Naive thymus-derived CD4-positive, alpha-beta T cell (primary cell): ENCODE measurements at regions of chr17 and their contacts with region 1.

Region 1: DNA sequence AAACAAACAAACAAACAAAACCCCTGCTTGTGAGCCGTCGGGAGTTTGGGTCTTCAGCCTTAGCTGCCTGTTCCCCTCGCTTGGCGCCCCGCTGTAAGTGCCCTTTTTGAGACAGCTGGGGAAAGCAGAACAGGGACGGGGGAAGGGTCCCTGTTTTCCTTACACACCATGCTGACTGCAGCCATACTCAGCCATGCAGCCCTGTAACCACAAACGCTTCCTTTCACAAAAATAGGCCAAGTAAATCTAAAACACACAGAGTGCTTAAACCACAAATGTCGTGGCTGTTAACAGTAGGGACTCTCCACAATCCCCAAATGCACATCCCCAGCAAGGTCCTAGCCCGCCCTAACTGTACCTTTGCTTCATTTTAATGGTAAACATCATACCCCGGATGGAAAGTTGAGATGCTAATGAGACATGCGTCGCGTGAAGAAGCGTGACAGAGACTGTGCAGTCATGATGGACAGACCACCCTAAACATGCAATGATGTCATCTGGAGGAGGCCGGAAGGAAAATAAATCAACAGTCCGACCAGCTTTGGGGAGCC is 129.9 kb downstream of the MGAT5B start:
- DNase-seq: peak in 8 of 9 donors; percentile 45 to 89 (median 80)
- ATAC-seq: peak; percentile 95
- H3K4me3 ChIP-seq: peak overlapping the region; percentile 52
- H3K4me3 Mint-ChIP-seq: peak overlapping the region; percentile 58 to 88 (median 74)
- H3K27ac ChIP-seq: peak overlapping the region; percentile 70
- H3K27ac Mint-ChIP-seq: peak overlapping the region; percentile 84 to 99 (median 93)
- H3K4me1 ChIP-seq: peaks cover 33 to 57% of the 10 kb centered on the region in 2 donors
- H3K4me1 Mint-ChIP-seq: peaks cover 27 to 74% (median 57%) of the 10 kb centered on the region in 7 donors
- H3K27me3 ChIP-seq: no peaks in the 10 kb centered on the region
- H3K27me3 Mint-ChIP-seq: no peaks in the 10 kb centered on the region

Region 2: GRCh38 chr17:76924345-76925342 is 73.4 kb before region 1 on chr17:
- CTCF ChIA-PET with region 1: no interaction called
- POLR2A ChIA-PET with region 1: no interaction called
- intact Hi-C with region 1: loop called in 1 of 2 experiments (anchors 10 kb)
- DNase-seq: no peak
- ATAC-seq: no peak
- H3K4me3 ChIP-seq: no peak overlapping the region
- H3K4me3 Mint-ChIP-seq: no peak overlapping the region
- H3K27ac ChIP-seq: no peak overlapping the region
- H3K27ac Mint-ChIP-seq: no peak overlapping the region
- H3K4me1 ChIP-seq: no peaks in the 10 kb centered on the region
- H3K4me1 Mint-ChIP-seq: no peaks in the 10 kb centered on the region
- H3K27me3 ChIP-seq: no peaks in the 10 kb centered on the region
- H3K27me3 Mint-ChIP-seq: peaks cover 0 to 5% (median 0%) of the 10 kb centered on the region in 5 donors

Region 3: GRCh38 chr17:76968707-76969597 is 29.1 kb before region 1 on chr17:
- CTCF ChIA-PET with region 1: no interaction called
- POLR2A ChIA-PET with region 1: interaction called, 4 read pairs
- intact Hi-C with region 1: loop called (anchors 1 to 2 kb)
- DNase-seq: peak; percentile 21 to 48 (median 36)
- ATAC-seq: peak; percentile 80
- H3K4me3 ChIP-seq: peak overlapping the region; percentile 59
- H3K4me3 Mint-ChIP-seq: peak overlapping the region; percentile 74 to 92 (median 86)
- H3K27ac ChIP-seq: peak overlapping the region; percentile 51
- H3K27ac Mint-ChIP-seq: peak overlapping the region; percentile 11 to 85 (median 54)
- H3K4me1 ChIP-seq: peaks cover 7 to 12% of the 10 kb centered on the region in 2 donors
- H3K4me1 Mint-ChIP-seq: peaks cover 9 to 37% (median 17%) of the 10 kb centered on the region in 7 donors
- H3K27me3 ChIP-seq: no peaks in the 10 kb centered on the region
- H3K27me3 Mint-ChIP-seq: peaks cover 0 to 56% (median 8%) of the 10 kb centered on the region in 5 donors

Region 4: GRCh38 chr17:77011173-77012011 is 13.3 kb after region 1 on chr17:
- CTCF ChIA-PET with region 1: interaction called, 3 read pairs
- POLR2A ChIA-PET with region 1: interaction called, 10 read pairs
- intact Hi-C with region 1: no loop called
- DNase-seq: peak in 8 of 9 donors; percentile 18 to 53 (median 36)
- ATAC-seq: no peak
- H3K4me3 ChIP-seq: no peak overlapping the region
- H3K4me3 Mint-ChIP-seq: no peak overlapping the region
- H3K27ac ChIP-seq: no peak overlapping the region
- H3K27ac Mint-ChIP-seq: no peak overlapping the region
- H3K4me1 ChIP-seq: no peaks in the 10 kb centered on the region
- H3K4me1 Mint-ChIP-seq: peaks cover 0 to 7% (median 0%) of the 10 kb centered on the region in 7 donors
- H3K27me3 ChIP-seq: no peaks in the 10 kb centered on the region
- H3K27me3 Mint-ChIP-seq: peaks cover 0 to 42% (median 0%) of the 10 kb centered on the region in 5 donors

Region 5: DNA sequence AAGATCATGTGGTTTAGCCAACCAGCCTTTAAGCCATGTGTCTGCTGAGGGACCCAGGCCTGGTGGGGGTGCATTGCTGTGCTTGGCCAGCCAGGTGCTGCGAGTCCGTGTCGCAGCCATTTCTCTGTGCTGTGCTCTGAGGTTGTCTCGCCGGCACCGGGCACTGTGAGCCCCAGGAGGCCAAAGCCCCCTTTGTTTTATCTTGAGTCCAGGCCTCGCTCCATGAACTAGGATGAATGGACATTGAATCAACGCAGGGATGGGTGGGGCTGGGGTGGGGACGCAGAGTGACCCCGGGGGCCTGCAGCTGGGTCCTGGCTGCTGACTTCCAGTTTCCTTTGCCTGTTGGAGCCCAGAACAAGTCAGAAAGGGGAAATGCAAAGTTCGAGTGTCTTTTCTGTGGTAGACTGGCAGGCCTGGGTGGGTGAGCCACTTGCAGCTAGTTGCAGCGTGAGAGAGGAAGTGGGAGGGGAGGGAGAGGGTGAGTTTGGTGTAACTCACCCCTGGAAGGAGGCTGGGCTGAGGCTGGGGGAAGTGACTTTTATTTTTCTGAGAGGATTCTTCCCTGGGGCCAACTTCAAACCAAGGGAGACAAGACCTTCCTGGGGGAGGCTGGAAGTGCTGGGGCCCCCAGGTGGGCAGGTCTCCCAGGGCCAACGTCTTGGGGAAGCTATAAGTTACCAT is 467.4 kb after region 1 on chr17:
- CTCF ChIA-PET with region 1: no interaction called
- POLR2A ChIA-PET with region 1: interaction called, 3 read pairs
- intact Hi-C with region 1: loop called in 1 of 2 experiments (anchors 5 kb)
- DNase-seq: peak in 8 of 9 donors; percentile 67 to 89 (median 87)
- ATAC-seq: peak; percentile 97
- H3K4me3 ChIP-seq: peak overlapping the region; percentile 54
- H3K4me3 Mint-ChIP-seq: peak overlapping the region; percentile 79 to 87 (median 84)
- H3K27ac ChIP-seq: peak overlapping the region; percentile 64
- H3K27ac Mint-ChIP-seq: peak overlapping the region; percentile 88 to 100 (median 94)
- H3K4me1 ChIP-seq: peaks cover 88 to 90% of the 10 kb centered on the region in 2 donors
- H3K4me1 Mint-ChIP-seq: peaks cover 74 to 96% (median 86%) of the 10 kb centered on the region in 7 donors
- H3K27me3 ChIP-seq: no peaks in the 10 kb centered on the region
- H3K27me3 Mint-ChIP-seq: no peaks in the 10 kb centered on the region